ENCODE measurements at regions of chr1 and their contacts with region 1.

Region 1: GRCh38 chr1:110034451-110035235 is at the start of gene STRIP1:
- DNase-seq: peak; percentile 92
- CTCF ChIP-seq: no peak

Region 2: DNA sequence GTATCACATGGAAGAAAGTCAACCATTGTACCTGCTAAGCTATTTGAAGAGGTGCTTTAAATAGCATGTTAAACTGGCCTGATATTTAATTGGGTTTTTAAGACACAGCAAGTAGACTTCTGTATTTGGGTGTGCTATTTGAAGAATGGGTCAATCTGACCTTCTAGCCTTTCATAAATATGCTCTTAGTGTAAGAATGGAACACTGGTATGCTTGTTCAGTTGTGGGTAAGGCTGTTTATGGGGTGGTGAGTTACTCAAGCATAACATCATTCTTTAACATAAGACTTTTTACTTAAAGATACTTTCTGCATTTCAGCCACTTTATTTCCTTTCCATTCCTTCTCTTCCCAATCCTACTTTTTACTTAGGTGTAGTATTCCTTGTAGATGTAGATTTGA is 28.7 kb before region 1 on chr1:
- CTCF ChIA-PET with region 1: interaction called, 140 read pairs
- POLR2A ChIA-PET with region 1: no interaction called
- DNase-seq: no peak
- CTCF ChIP-seq: no peak

Region 3: GRCh38 chr1:110011527-110012041 is 23.1 kb before region 1 on chr1:
- CTCF ChIA-PET with region 1: interaction called, 140 read pairs
- POLR2A ChIA-PET with region 1: no interaction called
- DNase-seq: peak; percentile 80
- CTCF ChIP-seq: peak; percentile 50

Region 4: DNA sequence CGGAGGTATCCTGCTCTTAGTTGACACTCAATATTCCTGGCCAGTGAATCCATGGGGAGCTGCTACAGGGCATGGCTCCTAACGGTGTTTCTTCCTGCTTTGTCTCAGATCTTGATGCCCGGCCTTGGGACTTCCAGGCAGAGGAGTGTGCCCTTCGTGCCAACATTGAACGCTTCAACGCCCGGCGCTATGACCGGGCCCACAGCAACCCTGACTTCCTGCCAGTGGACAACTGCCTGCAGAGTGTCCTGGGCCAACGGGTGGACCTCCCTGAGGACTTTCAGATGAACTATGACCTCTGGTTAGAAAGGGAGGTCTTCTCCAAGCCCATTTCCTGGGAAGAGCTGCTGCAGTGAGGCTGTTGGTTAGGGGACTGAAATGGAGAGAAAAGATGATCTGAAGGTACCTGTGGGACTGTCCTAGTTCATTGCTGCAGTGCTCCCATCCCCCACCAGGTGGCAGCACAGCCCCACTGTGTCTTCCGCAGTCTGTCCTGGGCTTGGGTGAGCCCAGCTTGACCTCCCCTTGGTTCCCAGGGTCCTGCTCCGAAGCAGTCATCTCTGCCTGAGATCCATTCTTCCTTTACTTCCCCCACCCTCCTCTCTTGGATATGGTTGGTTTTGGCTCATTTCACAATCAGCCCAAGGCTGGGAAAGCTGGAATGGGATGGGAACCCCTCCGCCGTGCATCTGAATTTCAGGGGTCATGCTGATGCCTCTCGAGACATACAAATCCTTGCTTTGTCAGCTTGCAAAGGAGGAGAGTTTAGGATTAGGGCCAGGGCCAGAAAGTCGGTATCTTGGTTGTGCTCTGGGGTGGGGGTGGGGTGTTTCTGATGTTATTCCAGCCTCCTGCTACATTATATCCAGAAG is 19.1 kb after region 1 on chr1:
- CTCF ChIA-PET with region 1: interaction called, 387 read pairs
- POLR2A ChIA-PET with region 1: interaction called, 3 read pairs
- DNase-seq: peak; percentile 80
- CTCF ChIP-seq: peak; percentile 90

Region 5: DNA sequence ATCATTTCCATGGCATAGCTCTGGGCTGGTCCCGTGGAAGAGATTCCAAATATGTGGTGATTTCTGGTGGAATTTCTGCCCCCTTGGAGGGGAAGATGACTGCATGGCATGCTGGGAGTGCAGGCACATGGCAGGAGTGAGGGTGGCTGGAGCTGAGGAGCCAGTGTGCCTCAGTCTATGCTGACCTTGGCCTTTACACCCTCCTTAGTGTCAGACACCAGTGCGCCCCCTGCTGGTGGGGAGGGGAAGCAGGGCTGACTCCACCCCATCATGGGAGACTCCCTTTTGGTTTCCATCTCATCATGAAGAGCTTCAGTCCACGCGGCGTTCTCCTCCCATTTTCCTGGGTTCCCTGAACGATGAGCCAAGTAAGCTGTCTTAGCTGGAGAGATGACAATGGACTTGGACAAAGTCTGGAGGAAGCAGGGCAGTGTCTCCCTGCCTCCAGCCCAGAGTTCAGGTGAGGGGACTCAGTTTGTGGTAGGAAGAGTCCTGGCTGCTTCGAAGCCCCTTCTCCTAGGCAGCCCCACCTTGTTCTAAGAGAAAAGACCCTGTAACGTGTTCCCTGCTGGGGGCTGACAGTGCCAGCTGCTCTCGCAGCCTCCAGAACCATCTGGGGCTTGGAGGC is 25.5 kb after region 1 on chr1:
- CTCF ChIA-PET with region 1: interaction called, 387 read pairs
- POLR2A ChIA-PET with region 1: no interaction called
- DNase-seq: peak; percentile 83
- CTCF ChIP-seq: peak; percentile 87

Region 6: DNA sequence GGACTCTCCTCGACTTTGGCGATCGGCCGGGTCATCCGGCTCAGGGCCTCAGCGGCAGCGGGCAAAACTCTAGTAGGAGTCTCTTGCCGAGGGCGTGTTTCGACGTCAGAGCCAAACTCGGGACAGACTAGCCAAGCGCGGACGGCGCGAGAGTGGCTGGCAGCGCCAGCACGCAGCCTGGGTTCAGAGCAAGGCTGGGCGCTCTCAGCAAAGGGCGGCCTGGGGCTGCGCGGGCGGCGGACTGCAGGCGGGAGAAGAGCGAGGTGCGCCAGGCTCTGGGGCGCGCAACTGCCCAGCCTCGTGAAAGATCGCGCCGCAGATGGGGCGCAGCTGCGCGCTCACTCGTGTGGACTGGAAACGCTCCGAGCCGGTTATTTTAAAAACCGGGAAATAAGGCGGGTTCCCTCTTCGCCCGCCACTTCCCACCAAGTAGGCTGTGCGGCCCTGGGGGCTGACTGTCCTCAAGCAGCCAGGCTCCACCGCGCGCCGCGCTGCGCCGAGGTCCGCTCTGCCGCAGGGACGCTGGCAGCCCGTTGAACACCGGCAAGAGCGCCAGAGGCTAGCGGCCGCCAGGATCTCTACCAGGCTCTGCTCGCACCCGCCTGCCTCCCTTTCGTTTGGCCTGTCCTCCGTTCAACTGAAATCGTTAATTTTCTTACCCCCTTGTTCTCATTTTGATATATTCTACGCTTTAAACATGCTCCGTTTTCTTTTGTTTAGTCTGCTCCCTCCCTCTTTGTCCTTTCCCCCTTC is 33.4 kb after region 1 on chr1:
- CTCF ChIA-PET with region 1: interaction called, 387 read pairs
- POLR2A ChIA-PET with region 1: no interaction called
- DNase-seq: no peak
- CTCF ChIP-seq: no peak

Region 7: GRCh38 chr1:110106013-110106941 is 71.6 kb after region 1 on chr1:
- CTCF ChIA-PET with region 1: interaction called, 58 read pairs
- POLR2A ChIA-PET with region 1: no interaction called
- DNase-seq: peak; percentile 85
- CTCF ChIP-seq: peak; percentile 96

Region 8: DNA sequence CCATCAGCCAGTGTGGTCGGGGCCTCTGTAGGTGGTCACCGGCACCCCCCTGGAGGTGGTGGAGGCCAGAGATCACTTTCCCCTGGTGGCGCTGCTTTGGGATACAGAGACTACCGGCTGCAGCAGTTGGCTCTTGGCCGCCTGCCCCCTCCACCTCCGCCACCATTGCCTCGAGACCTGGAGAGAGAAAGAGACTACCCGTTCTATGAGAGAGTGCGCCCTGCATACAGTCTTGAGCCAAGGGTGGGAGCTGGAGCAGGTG is 305.5 kb after region 1 on chr1:
- CTCF ChIA-PET with region 1: no interaction called
- POLR2A ChIA-PET with region 1: no interaction called
- DNase-seq: no peak
- CTCF ChIP-seq: no peak